K562 (cell line): ENCODE measurements at regions of chr11 and their contacts with region 1.

Region 1: GRCh38 chr11:72831513-72832300 is 17.5 kb downstream of the ATG16L2 start:
- DNase-seq: peak; percentile 77 to 85 (median 82)
- ATAC-seq: peak; percentile 97
- H3K4me3 ChIP-seq: no peak overlapping the region
- H3K27ac ChIP-seq: no peak overlapping the region
- H3K4me1 ChIP-seq: peaks cover 0 to 12% of the 10 kb centered on the region in 2 experiments; a peak in 4 of 5 replicates
- H3K27me3 ChIP-seq: no peaks in the 10 kb centered on the region
- CTCF ChIP-seq: peak; percentile 92 to 97 (median 96)
- EP300 ChIP-seq: no peak
- POLR2A ChIP-seq: no peak
- RAD21 ChIP-seq: peak; percentile 94 to 97

Region 2: DNA sequence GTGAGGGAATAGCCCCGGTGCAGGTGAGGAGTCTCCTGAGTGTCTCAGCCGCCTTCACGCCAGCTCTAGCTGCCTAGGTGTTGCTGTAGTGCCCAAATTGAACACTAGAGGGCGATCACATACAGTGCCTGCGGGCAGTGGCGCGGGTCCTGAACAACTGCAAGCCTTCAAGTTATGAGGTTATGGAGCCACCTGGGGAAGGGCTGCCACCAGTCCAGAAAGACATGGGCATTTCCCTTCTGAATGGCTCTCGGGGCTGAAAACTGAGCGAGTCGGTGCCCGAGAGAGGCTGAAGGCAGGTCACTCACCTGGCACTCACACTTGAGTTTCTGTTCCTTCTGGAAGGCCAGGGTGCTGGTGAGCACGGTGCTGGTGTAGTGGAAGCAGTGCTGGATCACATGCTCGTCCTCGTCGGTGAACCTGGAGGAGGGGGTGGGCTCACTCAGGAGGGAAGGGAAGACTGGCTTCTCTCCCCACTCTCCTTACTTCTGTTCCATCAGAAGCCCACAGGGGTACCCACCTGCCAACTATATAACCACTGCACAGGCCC is 245.9 kb before region 1 on chr11:
- CTCF ChIA-PET with region 1: no interaction called
- POLR2A ChIA-PET with region 1: interaction called, 3 read pairs
- in situ Hi-C with region 1: no loop called
- intact Hi-C with region 1: loop called (anchors 10 kb)
- DNase-seq: peak; percentile 80 to 85 (median 81)
- ATAC-seq: peak; percentile 90
- H3K4me3 ChIP-seq: no peak overlapping the region
- H3K27ac ChIP-seq: no peak overlapping the region
- H3K4me1 ChIP-seq: peaks cover 0 to 21% of the 10 kb centered on the region in 2 experiments; a peak in 2 of 5 replicates
- H3K27me3 ChIP-seq: peaks cover 11 to 67% of the 10 kb centered on the region in 2 experiments; a peak in 3 of 5 replicates
- CTCF ChIP-seq: peak; percentile 85 to 92 (median 86)
- EP300 ChIP-seq: no peak
- POLR2A ChIP-seq: no peak
- RAD21 ChIP-seq: peak; percentile 65 to 91

Region 3: DNA sequence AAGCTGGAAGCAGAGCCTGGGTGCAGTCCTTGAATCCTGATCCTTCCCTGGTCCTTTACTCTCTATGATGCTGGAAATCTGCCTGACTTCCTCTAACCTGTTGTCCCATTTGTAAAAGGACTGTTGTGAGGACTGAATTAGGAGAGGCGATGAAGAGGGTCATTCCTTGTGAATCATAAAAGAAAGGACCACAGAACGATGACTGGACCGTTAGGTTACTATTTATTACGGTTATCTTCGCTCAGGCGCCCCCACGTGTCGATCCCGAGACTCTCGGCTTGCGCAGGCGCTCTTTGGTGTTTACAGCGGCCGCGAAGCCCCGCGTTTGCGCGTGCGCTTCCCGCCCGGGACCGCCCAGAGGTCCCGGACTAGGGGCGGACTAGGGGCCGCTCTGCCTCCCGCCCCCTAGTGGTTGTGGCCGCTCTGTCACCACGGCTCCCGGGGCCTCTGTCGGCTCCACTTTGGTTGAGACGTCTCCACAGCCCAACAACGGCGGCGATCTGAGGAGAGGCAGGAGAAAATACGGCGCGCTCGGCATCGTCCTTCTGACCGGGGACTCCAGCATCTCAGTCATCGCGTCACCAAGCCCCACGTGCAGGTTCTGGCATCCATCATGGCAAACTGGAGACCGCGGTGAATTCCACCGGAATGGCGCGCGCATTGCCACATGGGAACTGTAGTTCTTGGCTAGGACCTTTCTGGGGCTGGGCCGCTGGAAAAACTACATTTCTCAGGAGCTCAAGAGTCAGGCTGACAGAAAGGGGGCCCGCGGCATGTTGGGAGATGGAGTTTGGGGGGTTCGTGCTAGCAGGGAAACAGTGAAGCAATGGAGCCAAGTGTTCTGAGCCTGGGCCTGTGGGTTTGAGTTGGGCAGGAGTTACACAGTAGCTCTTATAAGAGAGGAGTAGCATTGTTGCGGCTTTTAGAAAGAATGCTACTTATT is 38.0 kb before region 1 on chr11 and contains the start of gene STARD10:
- CTCF ChIA-PET with region 1: no interaction called
- POLR2A ChIA-PET with region 1: no interaction called
- in situ Hi-C with region 1: no loop called
- intact Hi-C with region 1: no loop called
- DNase-seq: peak; percentile 98 to 99 (median 99)
- ATAC-seq: peak; percentile 96
- H3K4me3 ChIP-seq: peak within 1 kb of the TSS; percentile 72
- H3K27ac ChIP-seq: peak within 1 kb of the TSS; percentile 86
- H3K4me1 ChIP-seq: peaks cover 23 to 40% of the 10 kb centered on the region in 2 experiments; a peak in 4 of 5 replicates
- H3K27me3 ChIP-seq: no peaks in the 10 kb centered on the region
- CTCF ChIP-seq: peak; percentile 91 to 99 (median 93)
- EP300 ChIP-seq: peak; percentile 38
- POLR2A ChIP-seq: peak; percentile 68
- RAD21 ChIP-seq: peak; percentile 80 to 85
- polyA plus RNA-seq, gene STARD10: 0.15 to 0.51 TPM

Region 4: DNA sequence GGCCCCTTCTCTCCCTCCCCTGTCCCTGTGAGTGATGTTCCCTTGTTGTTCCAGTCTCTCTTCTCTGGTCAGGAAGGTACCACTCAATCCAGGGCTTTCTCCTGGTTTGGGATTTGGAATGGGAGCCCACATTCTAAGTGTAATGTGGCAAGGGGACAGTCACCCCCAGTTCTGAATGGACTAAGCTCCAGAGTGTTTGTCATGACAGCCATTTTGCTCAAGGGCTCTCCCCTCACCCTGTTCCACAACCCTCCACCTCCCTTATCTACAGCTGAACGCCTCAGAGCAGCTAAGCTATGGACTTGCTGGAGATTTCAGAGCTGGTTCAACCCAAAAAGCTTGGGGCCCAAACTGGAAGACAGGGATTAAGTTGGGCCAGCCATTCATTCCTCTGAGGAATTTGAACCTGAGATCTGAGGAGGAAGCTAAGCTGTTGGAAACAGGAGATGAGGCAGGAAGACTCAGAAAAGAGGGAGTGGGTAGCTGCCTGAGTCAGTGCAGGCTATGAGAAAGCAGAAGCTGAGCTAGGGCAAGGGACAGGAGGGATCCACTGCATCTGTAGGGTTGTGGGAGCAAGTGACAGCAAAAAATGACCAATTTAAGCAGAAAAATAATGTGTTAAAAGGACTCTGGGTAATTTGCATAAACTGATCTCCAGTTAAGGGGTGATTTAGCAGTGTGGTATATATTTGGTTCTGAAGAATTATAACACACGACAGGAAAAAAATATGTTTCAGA is 333.3 kb after region 1 on chr11:
- CTCF ChIA-PET with region 1: no interaction called
- POLR2A ChIA-PET with region 1: no interaction called
- in situ Hi-C with region 1: no loop called
- intact Hi-C with region 1: no loop called
- DNase-seq: peak in 1 of 4 experiments; percentile 31
- ATAC-seq: peak; percentile 70
- H3K4me3 ChIP-seq: no peak overlapping the region
- H3K27ac ChIP-seq: no peak overlapping the region
- H3K4me1 ChIP-seq: peaks cover 15 to 29% of the 10 kb centered on the region in 2 experiments
- H3K27me3 ChIP-seq: no peaks in the 10 kb centered on the region
- CTCF ChIP-seq: no peak
- EP300 ChIP-seq: no peak
- POLR2A ChIP-seq: no peak
- RAD21 ChIP-seq: no peak

Region 5: GRCh38 chr11:73177778-73178577 is 346.3 kb after region 1 on chr11:
- CTCF ChIA-PET with region 1: interaction called, 47 read pairs
- POLR2A ChIA-PET with region 1: no interaction called
- in situ Hi-C with region 1: loop called (anchors 5 kb)
- intact Hi-C with region 1: loop called (anchors 1 kb)
- DNase-seq: peak; percentile 68 to 76 (median 70)
- ATAC-seq: peak; percentile 89
- H3K4me3 ChIP-seq: no peak overlapping the region
- H3K27ac ChIP-seq: no peak overlapping the region
- H3K4me1 ChIP-seq: peaks cover 5 to 7% of the 10 kb centered on the region in 2 experiments; a peak in 3 of 5 replicates
- H3K27me3 ChIP-seq: no peaks in the 10 kb centered on the region
- CTCF ChIP-seq: peak; percentile 73 to 83 (median 81)
- EP300 ChIP-seq: no peak
- POLR2A ChIP-seq: no peak
- RAD21 ChIP-seq: peak; percentile 94 to 96

Region 6: DNA sequence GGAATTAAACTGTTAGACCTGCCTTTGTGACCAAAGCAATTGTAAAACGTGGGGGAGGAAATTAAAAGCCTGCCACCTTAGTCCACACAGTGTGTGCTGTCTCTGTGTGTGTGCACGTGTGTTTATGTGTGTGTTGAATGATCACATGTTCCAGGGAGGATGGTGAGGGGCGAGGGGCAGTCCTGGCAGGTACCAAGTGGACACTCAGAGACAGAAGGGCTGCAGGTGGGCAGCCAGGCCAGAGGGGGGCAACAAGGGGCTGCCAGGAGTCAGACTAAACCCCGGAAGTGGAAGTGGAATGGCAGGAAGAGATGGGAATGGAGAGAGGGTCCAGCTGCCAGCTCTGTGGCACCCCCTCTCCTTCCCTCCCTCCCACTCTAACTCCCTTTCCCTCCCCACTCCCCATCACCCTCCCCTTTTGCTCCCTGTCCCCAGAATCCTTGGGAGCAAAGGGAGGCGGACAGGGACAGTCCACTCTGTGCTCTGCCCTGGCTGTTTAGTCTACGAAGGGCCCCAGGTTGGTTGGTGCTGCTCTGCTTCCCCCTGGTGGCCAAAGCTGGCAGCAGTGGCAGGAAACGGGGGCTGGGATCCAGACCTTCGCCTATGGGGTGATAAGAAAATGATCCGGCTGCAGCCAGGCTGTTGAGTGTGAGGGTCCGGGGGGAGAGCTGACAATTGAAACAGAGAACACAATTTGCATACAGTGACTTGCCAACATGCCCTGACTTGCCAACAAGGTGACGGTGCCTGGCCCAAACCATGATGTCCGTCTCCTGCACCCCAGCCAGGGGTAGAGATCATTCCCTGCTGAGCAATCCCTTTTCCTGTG is 410.8 kb after region 1 on chr11:
- CTCF ChIA-PET with region 1: interaction called, 10 read pairs
- POLR2A ChIA-PET with region 1: interaction called, 3 read pairs
- in situ Hi-C with region 1: loop called (anchors 5 kb)
- intact Hi-C with region 1: loop called (anchors 1 kb)
- DNase-seq: peak; percentile 78 to 83 (median 79)
- ATAC-seq: peak; percentile 96
- H3K4me3 ChIP-seq: peak overlapping the region; percentile 21; the same call in 1 of the 2 replicates
- H3K27ac ChIP-seq: no peak overlapping the region; the same call in 2 of the 3 replicates
- H3K4me1 ChIP-seq: peaks cover 0 to 3% of the 10 kb centered on the region in 2 experiments; a peak in 1 of 5 replicates
- H3K27me3 ChIP-seq: peaks cover 0 to 28% of the 10 kb centered on the region in 2 experiments; a peak in 4 of 5 replicates
- CTCF ChIP-seq: peak; percentile 83 to 89 (median 88)
- EP300 ChIP-seq: no peak
- POLR2A ChIP-seq: no peak
- RAD21 ChIP-seq: peak; percentile 68 to 81

Region 7: DNA sequence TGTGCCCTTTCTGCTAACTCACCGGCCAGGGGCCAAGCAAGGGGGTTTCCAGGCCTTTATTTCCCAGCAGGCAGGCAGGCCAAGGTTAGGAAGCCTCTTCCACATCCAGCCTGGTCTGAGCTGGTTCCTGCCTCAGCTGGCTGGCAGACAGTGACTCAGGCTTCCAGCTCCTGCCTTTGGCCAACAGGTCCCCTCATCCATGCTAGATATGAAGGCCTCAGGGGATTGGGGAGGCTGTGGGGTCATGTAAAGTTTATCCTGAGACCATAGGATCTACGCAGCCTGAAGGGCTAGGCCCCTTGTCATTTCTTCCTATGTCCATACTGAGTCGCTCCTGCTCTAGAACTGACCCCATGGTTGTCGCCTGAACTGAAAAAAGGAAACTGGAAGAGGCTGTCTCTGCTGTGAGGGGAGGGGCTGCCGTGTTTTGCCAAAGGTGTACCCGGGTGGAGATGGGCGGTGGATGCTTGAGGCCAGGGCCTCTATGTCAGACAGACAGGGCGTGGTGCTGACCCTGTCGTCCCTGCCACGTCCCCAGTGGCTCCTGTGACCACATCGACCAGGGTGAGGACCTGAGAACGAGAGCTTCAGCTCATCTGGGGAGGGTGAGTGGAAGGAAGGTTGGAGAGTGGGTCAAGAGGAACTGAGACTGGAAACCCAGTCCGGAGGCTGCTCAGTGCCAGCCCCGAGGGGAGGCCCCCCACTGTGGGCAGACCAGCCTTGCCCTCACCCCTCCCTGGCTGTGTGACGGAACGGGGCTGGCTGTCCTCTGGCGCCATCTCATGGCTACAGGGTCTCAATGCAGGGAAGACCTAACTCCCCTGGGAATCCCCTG is 457.4 kb after region 1 on chr11:
- CTCF ChIA-PET with region 1: interaction called, 8 read pairs
- POLR2A ChIA-PET with region 1: interaction called, 3 read pairs
- in situ Hi-C with region 1: no loop called
- intact Hi-C with region 1: loop called (anchors 5 kb)
- DNase-seq: peak; percentile 80 to 92 (median 90)
- ATAC-seq: peak; percentile 85
- H3K4me3 ChIP-seq: no peak overlapping the region
- H3K27ac ChIP-seq: peak overlapping the region; percentile 44
- H3K4me1 ChIP-seq: peaks cover 19 to 20% of the 10 kb centered on the region in 2 experiments; a peak in 4 of 5 replicates
- H3K27me3 ChIP-seq: peaks cover 0 to 4% of the 10 kb centered on the region in 2 experiments; a peak in 1 of 5 replicates
- CTCF ChIP-seq: peak; percentile 92 to 93 (median 92)
- EP300 ChIP-seq: no peak
- POLR2A ChIP-seq: no peak
- RAD21 ChIP-seq: peak; percentile 79 to 90

Region 8: GRCh38 chr11:73335204-73335923 is 503.7 kb after region 1 on chr11:
- CTCF ChIA-PET with region 1: no interaction called
- POLR2A ChIA-PET with region 1: no interaction called
- in situ Hi-C with region 1: no loop called
- intact Hi-C with region 1: loop called (anchors 5 kb)
- DNase-seq: peak; percentile 83 to 87 (median 85)
- ATAC-seq: peak; percentile 85
- H3K4me3 ChIP-seq: no peak overlapping the region
- H3K27ac ChIP-seq: no peak overlapping the region
- H3K4me1 ChIP-seq: peaks cover 13 to 16% of the 10 kb centered on the region in 2 experiments; a peak in 4 of 5 replicates
- H3K27me3 ChIP-seq: peaks cover 0 to 10% of the 10 kb centered on the region in 2 experiments; a peak in 2 of 5 replicates
- CTCF ChIP-seq: peak; percentile 94 to 97 (median 94)
- EP300 ChIP-seq: no peak
- POLR2A ChIP-seq: no peak
- RAD21 ChIP-seq: peak; percentile 69 to 80